Activated naive CD4-positive, alpha-beta T cell treated with anti-CD3 and anti-CD28 coated beads for 36 hours (primary cell): ENCODE measurements at regions of chr18 and their contacts with region 1.

Region 1: DNA sequence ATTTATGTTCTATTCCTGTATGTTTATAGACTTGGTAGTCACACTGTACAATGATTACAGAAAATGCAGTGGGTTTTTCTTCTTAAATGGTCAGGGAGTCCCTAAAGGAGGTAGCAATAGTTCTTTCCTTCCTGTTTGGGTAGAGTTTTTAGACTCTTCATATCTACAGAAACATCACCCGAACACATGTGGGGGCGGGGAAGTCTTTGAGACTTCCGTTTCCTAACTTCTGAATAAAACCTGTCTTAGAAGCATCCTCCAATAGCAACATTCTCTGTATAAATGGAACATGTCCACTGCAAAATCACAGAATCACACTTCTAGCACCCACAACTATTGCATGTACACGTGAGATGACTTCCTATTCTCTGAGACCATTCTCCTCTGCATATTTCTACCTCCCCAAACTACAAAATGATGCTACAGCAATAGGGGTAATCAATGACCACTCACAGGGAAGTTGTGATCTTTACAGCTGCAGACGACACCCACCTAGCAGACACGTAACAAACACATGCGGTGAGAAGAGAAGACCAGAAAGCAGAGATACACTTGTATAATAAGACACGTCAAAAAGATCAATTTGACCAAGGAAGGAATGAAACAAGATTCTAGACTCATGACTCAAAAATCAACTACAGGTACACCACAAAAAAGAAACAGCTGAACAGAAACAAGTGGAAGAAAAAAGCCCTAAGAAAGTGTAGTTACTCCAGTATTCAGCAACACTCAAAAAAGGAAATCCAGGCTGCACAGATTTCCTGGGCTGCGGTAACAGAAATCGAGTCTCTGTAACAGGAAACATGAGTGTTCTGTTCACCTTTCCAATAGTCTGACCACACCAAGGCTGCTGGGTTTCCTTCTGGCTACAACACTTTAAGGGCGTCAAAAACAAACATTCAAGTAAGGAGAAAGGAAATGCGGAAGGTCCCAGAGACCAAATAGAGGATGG is 120.4 kb downstream of the ZNF516 start:
- DNase-seq: peak; percentile 80
- H3K4me3 Mint-ChIP-seq: no peak overlapping the region
- H3K27ac Mint-ChIP-seq: peak overlapping the region; percentile 74
- H3K4me1 Mint-ChIP-seq: peaks cover 46% of the 10 kb centered on the region
- H3K27me3 Mint-ChIP-seq: peaks cover 2% of the 10 kb centered on the region

Region 2: DNA sequence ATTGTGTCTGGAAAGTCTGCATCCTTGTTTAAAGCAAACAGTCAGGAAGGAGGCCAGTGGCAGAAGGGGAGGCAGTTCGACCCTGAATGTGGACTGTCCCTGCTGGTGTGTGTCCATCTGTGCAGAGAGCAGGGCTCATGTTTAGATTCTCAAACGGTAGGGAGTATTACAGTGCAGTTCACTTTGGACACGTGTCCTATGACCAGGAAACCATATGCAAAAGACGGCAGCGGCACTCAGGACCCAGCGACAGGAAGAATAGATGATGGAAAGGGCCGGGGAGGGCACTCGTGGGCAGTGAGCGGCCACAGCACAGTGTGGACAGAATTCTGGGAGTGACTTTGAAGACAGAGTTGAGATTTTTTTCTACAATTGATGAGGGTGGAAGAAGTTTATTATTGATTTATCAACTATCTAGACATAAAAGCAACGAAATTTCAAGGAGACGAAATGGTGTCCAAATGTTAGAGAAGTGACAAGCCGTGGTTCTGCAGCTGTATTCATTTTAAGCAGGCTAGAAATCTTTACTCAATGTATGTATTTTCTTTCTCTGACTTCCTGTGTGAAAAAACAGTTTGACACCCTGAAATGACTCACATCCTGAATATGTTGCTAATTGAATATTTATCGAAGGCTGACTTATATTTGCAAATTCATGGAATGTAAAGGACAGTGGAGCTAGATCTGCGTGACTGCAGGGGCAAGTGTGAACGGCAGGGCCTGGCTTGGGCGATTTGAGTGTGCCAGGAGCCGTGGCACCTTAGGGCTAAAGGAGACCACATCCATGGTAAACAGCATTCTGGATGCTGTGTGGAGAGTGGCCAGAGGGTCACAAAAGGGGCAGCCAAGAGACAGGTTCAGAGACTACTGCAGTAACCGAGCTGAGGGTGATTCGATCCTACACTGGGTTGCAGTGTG is 1379.8 kb before region 1 on chr18:
- CTCF ChIA-PET with region 1: no interaction called
- intact Hi-C with region 1: loop called (anchors 10 kb)
- DNase-seq: peak; percentile 34
- H3K4me3 Mint-ChIP-seq: peak overlapping the region; percentile 30
- H3K27ac Mint-ChIP-seq: peak overlapping the region; percentile 50
- H3K4me1 Mint-ChIP-seq: peaks cover 41% of the 10 kb centered on the region
- H3K27me3 Mint-ChIP-seq: no peaks in the 10 kb centered on the region

Region 3: DNA sequence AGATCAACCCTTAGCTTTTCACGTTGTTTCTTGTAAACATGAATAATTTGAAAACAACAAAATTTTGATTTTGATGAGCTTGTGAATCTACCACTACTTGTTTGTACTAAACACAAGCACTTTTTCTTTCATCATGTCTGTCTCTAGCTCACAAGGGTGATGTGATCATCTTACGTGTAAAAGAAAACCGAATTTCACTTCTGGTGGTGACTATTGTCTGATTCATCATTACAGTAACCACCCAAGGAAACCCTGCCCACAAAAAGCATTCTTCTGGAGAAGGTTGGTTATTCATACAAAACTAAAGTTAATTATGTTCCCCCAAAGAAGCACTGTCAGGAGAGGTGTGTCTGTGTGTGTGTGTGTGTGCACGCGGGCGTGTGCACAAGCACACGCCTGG is 165.0 kb before region 1 on chr18:
- CTCF ChIA-PET with region 1: no interaction called
- intact Hi-C with region 1: loop called (anchors 1 kb)
- DNase-seq: peak; percentile 19
- H3K4me3 Mint-ChIP-seq: no peak overlapping the region
- H3K27ac Mint-ChIP-seq: peak overlapping the region; percentile 65
- H3K4me1 Mint-ChIP-seq: peaks cover 21% of the 10 kb centered on the region
- H3K27me3 Mint-ChIP-seq: peaks cover 15% of the 10 kb centered on the region

Region 4: GRCh38 chr18:76450452-76451395 is 76.1 kb after region 1 on chr18:
- CTCF ChIA-PET with region 1: no interaction called
- intact Hi-C with region 1: loop called (anchors 2 kb)
- DNase-seq: peak; percentile 54
- H3K4me3 Mint-ChIP-seq: peak overlapping the region; percentile 76
- H3K27ac Mint-ChIP-seq: peak overlapping the region; percentile 74
- H3K4me1 Mint-ChIP-seq: peaks cover 39% of the 10 kb centered on the region
- H3K27me3 Mint-ChIP-seq: peaks cover 3% of the 10 kb centered on the region

Region 5: DNA sequence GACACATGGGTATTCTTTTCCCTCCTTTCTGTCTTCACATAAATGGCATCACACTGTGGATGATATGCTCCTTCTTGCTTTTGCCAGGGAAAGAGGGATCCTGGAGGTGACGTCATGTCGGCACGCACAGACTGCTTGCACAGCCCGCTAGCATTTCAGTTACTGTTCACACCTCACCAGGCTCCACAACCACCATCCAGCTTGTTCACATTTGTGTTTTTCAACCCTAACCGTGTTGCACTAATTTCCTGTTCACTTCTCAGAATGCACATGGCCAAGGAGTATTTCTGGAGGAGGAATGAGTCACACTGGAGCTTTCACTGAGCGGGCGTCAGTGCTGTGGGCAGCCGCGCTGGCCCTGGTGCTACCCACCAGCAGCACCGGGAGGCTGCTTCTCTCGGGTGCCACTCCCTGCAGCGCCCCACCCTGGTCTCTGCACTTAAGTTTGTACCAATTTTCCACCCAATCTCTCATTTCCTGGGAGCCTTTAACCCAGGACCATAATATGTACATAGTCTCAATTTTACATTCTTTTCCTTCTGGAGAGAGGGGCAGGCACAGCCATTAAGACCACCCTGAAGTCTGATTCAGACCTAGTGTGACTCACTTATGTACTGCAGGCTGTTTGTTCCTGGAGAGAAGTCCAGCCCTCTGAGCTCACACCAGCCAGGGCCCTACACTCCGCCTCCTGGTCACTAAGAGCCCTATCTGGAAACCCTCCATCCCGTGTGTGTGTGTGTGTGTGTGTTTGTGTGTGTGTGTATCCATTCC is 692.9 kb after region 1 on chr18:
- CTCF ChIA-PET with region 1: no interaction called
- intact Hi-C with region 1: loop called (anchors 10 kb)
- DNase-seq: peak; percentile 77
- H3K4me3 Mint-ChIP-seq: peak overlapping the region; percentile 17
- H3K27ac Mint-ChIP-seq: peak overlapping the region; percentile 92
- H3K4me1 Mint-ChIP-seq: peaks cover 99% of the 10 kb centered on the region
- H3K27me3 Mint-ChIP-seq: no peaks in the 10 kb centered on the region